ENCODE measurements at regions of chr3 and their contacts with region 1.

Region 1: DNA sequence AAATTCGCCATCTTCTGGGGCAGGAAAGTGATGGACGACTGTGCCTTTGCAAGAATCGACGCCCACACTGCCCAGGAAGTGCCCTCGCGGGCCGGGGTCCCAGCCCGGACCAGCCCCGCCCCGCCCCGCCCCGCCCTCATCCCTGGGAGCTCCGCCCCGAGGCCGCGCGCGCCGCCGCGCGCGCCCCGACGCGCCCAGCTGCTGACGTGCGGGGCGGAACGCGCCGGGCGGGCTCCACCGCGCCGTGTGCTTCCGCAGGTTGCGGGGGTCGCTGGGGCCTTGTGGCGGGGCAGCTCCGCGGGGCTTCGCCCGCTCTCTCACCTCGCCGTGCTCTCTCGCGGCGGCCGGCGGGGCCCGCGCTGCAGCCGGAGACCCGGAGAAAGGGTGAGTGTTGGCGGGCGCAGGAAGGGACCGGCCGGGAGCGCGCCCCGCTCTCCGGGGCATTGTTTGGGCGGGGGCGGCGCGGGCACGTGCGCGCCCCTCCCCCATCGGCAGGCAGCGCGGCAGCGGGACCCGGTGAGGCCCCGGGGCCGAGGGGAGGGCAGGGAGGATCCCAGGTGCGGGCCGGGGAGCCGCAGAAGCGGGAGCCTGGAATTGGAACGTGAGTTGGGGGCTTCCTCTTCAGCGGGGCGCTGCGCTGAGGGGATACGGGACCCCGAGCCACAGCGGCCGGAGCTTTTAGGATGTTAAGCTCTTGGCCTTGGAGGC is at the start of gene YEATS2:
- DNase-seq: peak; percentile 31
- ATAC-seq: peak; percentile 83
- H3K4me3 ChIP-seq: peak within 1 kb of the TSS; percentile 89 to 93 (median 90)
- H3K27ac ChIP-seq: peak within 1 kb of the TSS; percentile 72
- H3K4me1 ChIP-seq: peaks cover 58% of the 10 kb centered on the region
- H3K27me3 ChIP-seq: no peaks in the 10 kb centered on the region; a peak in 1 of 5 replicates
- CTCF ChIP-seq: no peak
- EP300 ChIP-seq: no peak
- POLR2A ChIP-seq: peak; percentile 65 to 85
- RAD21 ChIP-seq: peak; percentile 63
- total RNA-seq, gene YEATS2: 16.0 and 18.6 TPM in 2 replicates

Region 2: DNA sequence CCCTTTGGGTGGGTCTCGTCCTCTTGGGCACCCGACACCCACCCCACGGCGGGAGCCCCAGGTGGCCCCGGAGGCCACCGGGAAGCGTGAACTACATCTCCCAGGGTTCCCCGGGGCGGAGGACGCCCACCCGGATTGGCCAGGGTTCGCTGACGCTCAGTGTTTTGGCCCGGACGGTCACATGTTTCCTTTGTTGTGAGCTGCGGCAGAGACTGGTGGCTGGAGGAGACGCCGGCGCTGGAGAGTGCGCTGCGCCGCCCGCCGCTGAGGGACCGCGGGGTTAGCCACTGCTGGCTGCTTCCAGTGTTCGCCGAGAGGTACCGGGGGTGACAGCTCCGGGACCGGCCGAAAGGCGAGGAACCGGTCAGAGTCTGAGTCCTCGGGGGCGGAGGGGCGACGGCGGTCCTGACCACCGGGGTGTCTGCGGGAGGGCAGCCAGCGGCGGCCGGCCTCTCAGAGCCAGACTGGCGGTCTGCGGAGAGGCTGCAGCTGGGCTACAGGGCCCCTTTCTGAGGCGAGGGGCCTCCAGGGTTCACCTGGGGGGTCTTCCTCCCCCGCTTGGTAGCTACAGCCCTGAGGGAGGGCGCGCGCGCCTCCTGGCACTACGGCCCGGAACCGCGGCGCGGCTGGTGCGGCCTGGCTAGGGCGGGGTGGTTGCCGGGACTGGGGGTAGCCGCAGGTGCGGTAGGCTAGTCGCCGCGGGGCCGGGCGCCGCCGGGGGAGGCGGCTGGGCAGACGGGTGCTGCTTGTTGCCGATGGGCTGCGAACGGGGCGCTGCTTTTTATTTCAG is 62.1 kb before region 1 on chr3 and contains the start of gene KLHL24:
- CTCF ChIA-PET with region 1: no interaction called
- POLR2A ChIA-PET with region 1: interaction called, 13 read pairs
- in situ Hi-C with region 1: no loop called
- intact Hi-C with region 1: loop called (anchors 5 kb)
- DNase-seq: peak; percentile 89
- ATAC-seq: peak; percentile 91
- H3K4me3 ChIP-seq: peak within 1 kb of the TSS; percentile 83 to 99 (median 95)
- H3K27ac ChIP-seq: peak within 1 kb of the TSS; percentile 94
- H3K4me1 ChIP-seq: peaks cover 29% of the 10 kb centered on the region
- H3K27me3 ChIP-seq: no peaks in the 10 kb centered on the region
- CTCF ChIP-seq: no peak
- EP300 ChIP-seq: no peak
- POLR2A ChIP-seq: peak; percentile 69 to 72
- RAD21 ChIP-seq: no peak; the same call in 1 of the 2 replicates
- total RNA-seq, gene KLHL24: 6.9 and 9.7 TPM in 2 replicates

Region 3: GRCh38 chr3:184993394-184993793 is 1295.6 kb after region 1 on chr3:
- CTCF ChIA-PET with region 1: no interaction called
- POLR2A ChIA-PET with region 1: no interaction called
- in situ Hi-C with region 1: no loop called
- intact Hi-C with region 1: no loop called
- DNase-seq: no peak
- ATAC-seq: no peak
- H3K4me3 ChIP-seq: no peak overlapping the region
- H3K27ac ChIP-seq: no peak overlapping the region
- H3K4me1 ChIP-seq: no peaks in the 10 kb centered on the region
- H3K27me3 ChIP-seq: no peaks in the 10 kb centered on the region
- CTCF ChIP-seq: no peak
- EP300 ChIP-seq: no peak
- POLR2A ChIP-seq: no peak
- RAD21 ChIP-seq: no peak